ENCODE measurements at regions of chr1 and their contacts with region 1.

Region 1: GRCh38 chr1:211476200-211476849 is 15.6 kb downstream of the RD3 start:
- DNase-seq: peak; percentile 90
- H3K4me3 Mint-ChIP-seq: no peak overlapping the region
- H3K27ac Mint-ChIP-seq: no peak overlapping the region
- H3K4me1 Mint-ChIP-seq: no peaks in the 10 kb centered on the region
- H3K27me3 Mint-ChIP-seq: peaks cover 16% of the 10 kb centered on the region

Region 2: GRCh38 chr1:211017075-211017748 is 459.1 kb before region 1 on chr1:
- CTCF ChIA-PET with region 1: no interaction called
- intact Hi-C with region 1: no loop called
- DNase-seq: no peak
- H3K4me3 Mint-ChIP-seq: no peak overlapping the region
- H3K27ac Mint-ChIP-seq: no peak overlapping the region
- H3K4me1 Mint-ChIP-seq: no peaks in the 10 kb centered on the region
- H3K27me3 Mint-ChIP-seq: peaks cover 32% of the 10 kb centered on the region

Region 3: GRCh38 chr1:211210052-211210451 is 266.3 kb before region 1 on chr1:
- CTCF ChIA-PET with region 1: no interaction called
- intact Hi-C with region 1: no loop called
- DNase-seq: no peak
- H3K4me3 Mint-ChIP-seq: no peak overlapping the region
- H3K27ac Mint-ChIP-seq: no peak overlapping the region
- H3K4me1 Mint-ChIP-seq: no peaks in the 10 kb centered on the region
- H3K27me3 Mint-ChIP-seq: no peaks in the 10 kb centered on the region

Region 4: GRCh38 chr1:211420389-211420788 is 55.9 kb before region 1 on chr1:
- CTCF ChIA-PET with region 1: interaction called, 3 read pairs
- intact Hi-C with region 1: loop called (anchors 1 kb)
- DNase-seq: peak; percentile 9
- H3K4me3 Mint-ChIP-seq: no peak overlapping the region
- H3K27ac Mint-ChIP-seq: no peak overlapping the region
- H3K4me1 Mint-ChIP-seq: peaks cover 16% of the 10 kb centered on the region
- H3K27me3 Mint-ChIP-seq: no peaks in the 10 kb centered on the region

Region 5: GRCh38 chr1:211541720-211542453 is 65.6 kb after region 1 on chr1:
- CTCF ChIA-PET with region 1: no interaction called
- intact Hi-C with region 1: no loop called
- DNase-seq: peak; percentile 12
- H3K4me3 Mint-ChIP-seq: no peak overlapping the region
- H3K27ac Mint-ChIP-seq: no peak overlapping the region
- H3K4me1 Mint-ChIP-seq: no peaks in the 10 kb centered on the region
- H3K27me3 Mint-ChIP-seq: peaks cover 6% of the 10 kb centered on the region

Measured in activated naive CD4-positive, alpha-beta T cell treated with anti-CD3 and anti-CD28 coated beads for 36 hours (primary cell).